Activated CD4-positive, alpha-beta memory T cell treated with anti-CD3 and anti-CD28 coated beads for 36 hours (primary cell): ENCODE measurements at regions of chr12 and their contacts with region 1.

Region 1: DNA sequence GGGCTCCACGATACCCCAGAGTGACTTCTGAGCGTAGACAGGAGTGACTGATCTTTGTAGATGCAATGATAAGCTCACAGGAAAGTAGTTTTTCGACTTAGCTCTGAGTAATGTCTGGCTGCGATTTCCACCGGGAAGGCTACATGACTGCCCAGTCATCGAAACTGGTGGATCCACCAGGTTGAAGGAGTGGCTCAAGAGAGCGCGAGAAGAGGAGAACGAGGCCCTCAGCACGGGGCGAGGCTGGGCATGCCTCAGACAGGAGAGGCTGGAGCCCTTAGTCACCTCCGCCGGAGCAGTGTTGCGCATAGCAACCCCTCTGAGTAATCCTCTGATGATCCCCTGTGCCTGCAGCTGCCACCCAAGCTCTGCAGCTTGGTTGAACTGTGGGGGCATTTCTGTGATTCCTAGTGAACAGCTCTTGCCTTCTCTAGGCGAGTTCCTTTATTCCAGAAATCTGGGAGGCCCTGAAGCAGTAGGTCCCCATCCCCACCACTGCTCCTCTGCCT is 25.6 kb downstream of the ELK3 start:
- DNase-seq: peak; percentile 36
- H3K4me3 Mint-ChIP-seq: no peak overlapping the region
- H3K27ac Mint-ChIP-seq: peak overlapping the region; percentile 14
- H3K4me1 Mint-ChIP-seq: peaks cover 53% of the 10 kb centered on the region
- H3K27me3 Mint-ChIP-seq: no peaks in the 10 kb centered on the region

Region 2: GRCh38 chr12:95942524-95943329 is 277.0 kb before region 1 on chr12 and contains the start of gene CCDC38:
- CTCF ChIA-PET with region 1: no interaction called
- POLR2A ChIA-PET with region 1: interaction called, 5 read pairs
- intact Hi-C with region 1: loop called (anchors 10 kb)
- DNase-seq: peak; percentile 90
- H3K4me3 Mint-ChIP-seq: peak within 1 kb of the TSS; percentile 83
- H3K27ac Mint-ChIP-seq: peak within 1 kb of the TSS; percentile 86
- H3K4me1 Mint-ChIP-seq: peaks cover 10% of the 10 kb centered on the region
- H3K27me3 Mint-ChIP-seq: no peaks in the 10 kb centered on the region
- total RNA-seq, gene CCDC38: 0.24 TPM in 1 of 2 experiments, not detected in the other

Region 3: DNA sequence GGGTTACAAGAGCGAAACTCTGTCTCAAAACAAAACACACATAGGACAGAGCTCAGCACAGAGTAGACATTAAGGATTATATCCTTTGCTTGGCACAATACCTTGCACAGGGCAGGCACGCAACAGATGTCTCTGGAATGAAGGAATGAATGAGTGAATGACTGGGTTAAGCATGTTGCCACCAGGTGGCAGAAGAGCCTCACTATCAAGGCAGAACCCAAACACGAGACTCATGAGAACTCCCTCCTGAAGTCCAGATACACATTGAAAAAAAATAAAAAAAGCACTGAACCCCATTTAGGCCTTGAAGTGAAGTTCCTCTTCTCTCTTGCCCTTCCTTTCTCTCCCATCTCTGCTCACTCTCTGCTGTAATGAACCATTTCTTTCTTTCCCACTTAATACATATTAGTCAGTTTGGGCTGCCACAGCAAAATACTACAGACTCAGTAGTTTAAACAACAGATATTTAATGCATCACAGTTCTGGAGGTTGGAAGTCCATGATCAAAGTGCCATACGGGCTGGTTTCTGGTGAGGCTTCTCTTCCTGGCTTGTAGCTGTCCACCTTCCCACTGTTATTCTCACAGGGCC is 157.8 kb before region 1 on chr12:
- CTCF ChIA-PET with region 1: interaction called, 126 read pairs
- POLR2A ChIA-PET with region 1: interaction called, 4 read pairs
- intact Hi-C with region 1: loop called (anchors 1 kb)
- DNase-seq: peak; percentile 83
- H3K4me3 Mint-ChIP-seq: no peak overlapping the region
- H3K27ac Mint-ChIP-seq: no peak overlapping the region
- H3K4me1 Mint-ChIP-seq: peaks cover 26% of the 10 kb centered on the region
- H3K27me3 Mint-ChIP-seq: no peaks in the 10 kb centered on the region

Region 4: GRCh38 chr12:96073346-96074330 is 146.1 kb before region 1 on chr12:
- CTCF ChIA-PET with region 1: interaction called, 14 read pairs
- POLR2A ChIA-PET with region 1: interaction called, 7 read pairs
- intact Hi-C with region 1: no loop called
- DNase-seq: no peak
- H3K4me3 Mint-ChIP-seq: no peak overlapping the region
- H3K27ac Mint-ChIP-seq: no peak overlapping the region
- H3K4me1 Mint-ChIP-seq: peaks cover 14% of the 10 kb centered on the region
- H3K27me3 Mint-ChIP-seq: peaks cover 1% of the 10 kb centered on the region

Region 5: DNA sequence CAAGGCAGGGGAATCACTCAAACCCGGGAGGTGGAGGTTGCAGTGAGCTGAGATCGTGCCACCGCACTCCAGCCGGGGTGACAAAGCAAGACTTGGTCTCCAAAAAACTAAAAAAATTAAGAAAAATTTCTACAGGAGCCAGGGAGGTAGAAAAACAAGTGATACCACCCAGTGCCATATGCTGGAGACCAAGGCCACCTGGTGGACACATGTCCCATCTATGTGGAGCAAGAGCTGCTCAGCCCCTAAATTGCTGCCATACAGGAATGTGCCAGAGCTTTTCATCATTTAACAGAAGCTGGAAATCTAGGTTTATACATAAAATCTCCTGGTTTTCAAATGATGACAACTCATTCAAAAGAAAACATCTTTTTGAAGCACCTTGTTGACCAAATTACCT is 86.9 kb before region 1 on chr12:
- CTCF ChIA-PET with region 1: interaction called, 13 read pairs
- POLR2A ChIA-PET with region 1: no interaction called
- intact Hi-C with region 1: no loop called
- DNase-seq: peak; percentile 31
- H3K4me3 Mint-ChIP-seq: no peak overlapping the region
- H3K27ac Mint-ChIP-seq: no peak overlapping the region
- H3K4me1 Mint-ChIP-seq: peaks cover 22% of the 10 kb centered on the region
- H3K27me3 Mint-ChIP-seq: peaks cover 6% of the 10 kb centered on the region

Region 6: GRCh38 chr12:96233939-96234461 is 14.2 kb after region 1 on chr12:
- CTCF ChIA-PET with region 1: interaction called, 13 read pairs
- POLR2A ChIA-PET with region 1: interaction called, 3 read pairs
- intact Hi-C with region 1: no loop called
- DNase-seq: no peak
- H3K4me3 Mint-ChIP-seq: no peak overlapping the region
- H3K27ac Mint-ChIP-seq: no peak overlapping the region
- H3K4me1 Mint-ChIP-seq: peaks cover 54% of the 10 kb centered on the region
- H3K27me3 Mint-ChIP-seq: no peaks in the 10 kb centered on the region